CD8-positive, alpha-beta memory T cell (primary cell): ENCODE measurements at regions of chr4 and their contacts with region 1.

Region 1: DNA sequence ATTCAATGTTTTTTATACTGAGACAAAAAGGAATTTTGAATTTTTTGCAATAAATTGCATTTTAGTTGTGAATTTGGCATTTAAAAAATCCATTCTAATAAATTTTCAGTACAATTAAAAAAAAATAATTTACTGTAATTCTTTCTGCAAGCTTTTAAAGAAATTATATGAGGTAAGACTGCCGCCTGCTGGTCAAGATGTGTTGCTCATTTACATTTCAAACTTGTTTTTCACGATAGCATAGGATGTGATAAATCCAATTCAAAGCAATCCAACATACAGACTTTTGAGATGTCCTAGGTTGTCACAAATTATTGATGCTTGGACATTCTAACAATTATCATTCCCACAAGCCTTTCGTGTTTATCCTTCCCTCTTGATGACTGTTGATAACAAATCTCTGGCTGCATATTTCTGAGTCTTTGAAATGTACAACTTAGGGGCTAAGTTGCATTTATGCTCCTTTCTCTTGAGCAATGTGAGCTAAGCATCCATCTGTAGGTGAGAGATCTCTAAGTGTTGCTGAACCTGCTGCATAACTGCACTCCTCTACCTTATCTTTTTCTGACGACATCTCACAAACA is 21.7 kb upstream of the MFAP3L start:
- DNase-seq: peak; percentile 30 to 56 (median 35)
- H3K4me3 ChIP-seq: no peak overlapping the region
- H3K4me3 Mint-ChIP-seq: no peak overlapping the region
- H3K27ac ChIP-seq: no peak overlapping the region
- H3K27ac Mint-ChIP-seq: no peak overlapping the region
- H3K4me1 ChIP-seq: no peaks in the 10 kb centered on the region
- H3K4me1 Mint-ChIP-seq: no peaks in the 10 kb centered on the region
- H3K27me3 ChIP-seq: no peaks in the 10 kb centered on the region
- H3K27me3 Mint-ChIP-seq: peaks cover 0 to 10% of the 10 kb centered on the region in 2 donors

Region 2: DNA sequence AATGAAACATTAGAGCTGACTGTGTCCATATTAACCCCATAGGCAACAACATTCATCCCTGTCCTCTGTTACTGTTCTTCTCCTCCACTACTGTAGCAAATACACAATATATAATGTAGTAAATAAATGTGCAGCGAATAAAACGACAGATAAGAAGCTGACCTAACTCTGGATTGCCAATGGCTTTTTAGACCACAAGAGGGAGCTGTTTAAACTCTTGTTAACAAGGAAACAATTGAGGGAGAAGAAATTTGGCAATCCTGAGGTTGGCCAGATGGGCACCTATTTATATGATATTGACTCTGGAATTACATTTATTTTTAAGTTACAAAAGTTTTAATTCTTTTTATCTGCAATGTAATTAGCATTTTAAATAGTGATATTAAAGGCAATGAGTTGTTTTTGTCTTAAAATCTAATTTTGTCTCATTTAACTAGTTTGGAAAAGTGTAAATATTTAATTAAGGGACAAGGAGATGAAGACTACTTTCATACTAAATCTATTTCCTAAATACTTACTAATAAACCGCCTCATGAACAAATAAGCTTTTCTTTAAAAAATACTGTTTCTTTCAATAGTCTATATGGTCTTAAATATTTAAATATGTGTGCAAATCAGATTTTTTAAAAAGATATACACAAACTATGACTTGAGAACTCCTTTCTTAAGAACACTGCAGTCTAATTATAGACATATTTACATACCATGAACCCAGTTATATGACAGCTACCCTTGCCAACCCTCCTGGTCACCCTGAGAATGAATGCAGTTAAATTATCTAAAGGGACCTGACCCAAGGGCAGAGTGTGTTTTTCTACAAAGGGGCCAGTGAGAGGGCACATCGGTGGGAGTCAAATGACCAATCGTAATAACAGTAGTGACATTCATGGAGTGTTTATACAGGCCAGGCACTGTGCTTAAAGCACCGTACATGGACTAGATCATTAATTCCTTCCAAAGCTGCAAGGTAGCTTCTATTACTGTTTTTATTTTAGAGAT is 237.2 kb before region 1 on chr4:
- CTCF ChIA-PET with region 1: interaction called, 30 read pairs
- POLR2A ChIA-PET with region 1: no interaction called
- DNase-seq: peak in 2 of 5 donors; percentile 20 to 46
- H3K4me3 ChIP-seq: no peak overlapping the region
- H3K4me3 Mint-ChIP-seq: no peak overlapping the region
- H3K27ac ChIP-seq: no peak overlapping the region
- H3K27ac Mint-ChIP-seq: no peak overlapping the region
- H3K4me1 ChIP-seq: no peaks in the 10 kb centered on the region
- H3K4me1 Mint-ChIP-seq: no peaks in the 10 kb centered on the region
- H3K27me3 ChIP-seq: no peaks in the 10 kb centered on the region
- H3K27me3 Mint-ChIP-seq: peaks cover under 1 to 32% of the 10 kb centered on the region in 2 donors